ENCODE measurements at regions of chr13 and their contacts with region 1.

Region 1: GRCh38 chr13:77124423-77124822 is 97.5 kb upstream of the FBXL3 start:
- DNase-seq: no peak
- ATAC-seq: no peak
- H3K4me3 ChIP-seq: no peak overlapping the region
- H3K4me3 Mint-ChIP-seq: no peak overlapping the region
- H3K27ac ChIP-seq: no peak overlapping the region
- H3K27ac Mint-ChIP-seq: no peak overlapping the region
- H3K4me1 ChIP-seq: no peaks in the 10 kb centered on the region
- H3K4me1 Mint-ChIP-seq: peaks cover 0 to 4% (median 0%) of the 10 kb centered on the region in 7 donors
- H3K27me3 ChIP-seq: no peaks in the 10 kb centered on the region
- H3K27me3 Mint-ChIP-seq: no peaks in the 10 kb centered on the region

Region 2: GRCh38 chr13:77136902-77137420 is 12.5 kb after region 1 on chr13:
- CTCF ChIA-PET with region 1: no interaction called
- POLR2A ChIA-PET with region 1: no interaction called
- intact Hi-C with region 1: loop called in 1 of 2 experiments (anchors 2 kb)
- DNase-seq: no peak
- ATAC-seq: no peak
- H3K4me3 ChIP-seq: no peak overlapping the region
- H3K4me3 Mint-ChIP-seq: no peak overlapping the region
- H3K27ac ChIP-seq: no peak overlapping the region
- H3K27ac Mint-ChIP-seq: peak overlapping the region in 4 of 9 donors; percentile 8 to 72 (median 56)
- H3K4me1 ChIP-seq: no peaks in the 10 kb centered on the region
- H3K4me1 Mint-ChIP-seq: peaks cover 0 to 13% (median 0%) of the 10 kb centered on the region in 7 donors
- H3K27me3 ChIP-seq: no peaks in the 10 kb centered on the region
- H3K27me3 Mint-ChIP-seq: no peaks in the 10 kb centered on the region

Region 3: DNA sequence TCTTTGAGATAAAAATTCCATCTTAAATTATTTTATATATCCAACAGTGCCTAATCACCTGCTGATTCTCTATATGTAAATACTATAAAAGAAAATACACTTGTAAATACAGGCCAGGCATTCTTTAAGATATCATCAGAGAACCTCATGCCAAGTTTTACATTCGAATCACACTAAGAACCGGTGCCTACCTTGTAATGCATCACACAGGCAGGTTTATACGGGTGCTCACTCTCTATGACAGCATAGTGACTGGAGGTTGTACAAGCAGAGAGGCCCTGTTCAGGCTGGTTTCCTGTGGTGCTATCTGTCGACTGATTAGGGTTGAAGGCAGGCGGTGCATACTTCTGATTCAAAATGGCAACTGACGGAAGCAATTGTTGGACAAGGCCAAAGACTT is 43.8 kb after region 1 on chr13:
- CTCF ChIA-PET with region 1: no interaction called
- POLR2A ChIA-PET with region 1: no interaction called
- intact Hi-C with region 1: loop called in 1 of 2 experiments (anchors 5 kb)
- DNase-seq: no peak
- ATAC-seq: no peak
- H3K4me3 ChIP-seq: no peak overlapping the region
- H3K4me3 Mint-ChIP-seq: no peak overlapping the region
- H3K27ac ChIP-seq: no peak overlapping the region
- H3K27ac Mint-ChIP-seq: no peak overlapping the region
- H3K4me1 ChIP-seq: no peaks in the 10 kb centered on the region
- H3K4me1 Mint-ChIP-seq: peaks cover 0 to 12% (median 7%) of the 10 kb centered on the region in 7 donors
- H3K27me3 ChIP-seq: no peaks in the 10 kb centered on the region
- H3K27me3 Mint-ChIP-seq: no peaks in the 10 kb centered on the region

Measured in naive thymus-derived CD4-positive, alpha-beta T cell (primary cell).